Activated CD4-positive, alpha-beta T cell treated with anti-CD3 and anti-CD28 coated beads, Interleukin-2, amount 10 ng/mL, durations not matched to agents 7 days and 5 days (primary cell): ENCODE measurements at regions of chr7 and their contacts with region 1.

Region 1: DNA sequence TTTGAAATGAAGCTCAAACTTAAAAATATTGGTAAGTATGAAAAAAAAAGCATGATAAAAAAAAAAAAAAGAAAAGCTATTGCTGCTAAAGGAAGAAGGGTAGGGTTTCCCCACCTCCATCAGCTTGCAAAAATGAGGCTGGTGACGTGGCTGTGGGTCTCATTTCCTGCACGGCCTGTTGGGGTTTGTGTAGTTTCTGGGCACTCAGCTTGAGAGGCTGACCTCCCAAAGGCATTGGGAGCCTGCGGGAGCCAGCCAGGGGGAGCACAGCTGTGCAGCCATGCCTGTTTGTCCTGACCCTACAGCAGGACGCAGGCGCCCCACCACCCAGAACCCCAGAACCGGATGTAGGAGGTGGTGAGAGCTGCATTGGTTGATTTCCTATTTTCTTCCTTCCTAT is 48.8 kb upstream of the CARD11 start:
- DNase-seq: peak; percentile 83
- H3K4me3 Mint-ChIP-seq: peak overlapping the region; percentile 30
- H3K27ac Mint-ChIP-seq: peak overlapping the region; percentile 93
- H3K4me1 Mint-ChIP-seq: peaks cover 64% of the 10 kb centered on the region
- H3K27me3 Mint-ChIP-seq: no peaks in the 10 kb centered on the region

Region 2: GRCh38 chr7:3065724-3066143 is 26.7 kb before region 1 on chr7:
- CTCF ChIA-PET with region 1: interaction called, 17 read pairs
- POLR2A ChIA-PET with region 1: interaction called, 6 read pairs
- DNase-seq: peak; percentile 58
- H3K4me3 Mint-ChIP-seq: peak overlapping the region; percentile 9
- H3K27ac Mint-ChIP-seq: peak overlapping the region; percentile 66
- H3K4me1 Mint-ChIP-seq: peaks cover 85% of the 10 kb centered on the region
- H3K27me3 Mint-ChIP-seq: no peaks in the 10 kb centered on the region

Region 3: GRCh38 chr7:3073763-3074458 is 18.6 kb before region 1 on chr7:
- CTCF ChIA-PET with region 1: interaction called, 17 read pairs
- POLR2A ChIA-PET with region 1: no interaction called
- DNase-seq: no peak
- H3K4me3 Mint-ChIP-seq: no peak overlapping the region
- H3K27ac Mint-ChIP-seq: no peak overlapping the region
- H3K4me1 Mint-ChIP-seq: peaks cover 23% of the 10 kb centered on the region
- H3K27me3 Mint-ChIP-seq: no peaks in the 10 kb centered on the region

Region 4: DNA sequence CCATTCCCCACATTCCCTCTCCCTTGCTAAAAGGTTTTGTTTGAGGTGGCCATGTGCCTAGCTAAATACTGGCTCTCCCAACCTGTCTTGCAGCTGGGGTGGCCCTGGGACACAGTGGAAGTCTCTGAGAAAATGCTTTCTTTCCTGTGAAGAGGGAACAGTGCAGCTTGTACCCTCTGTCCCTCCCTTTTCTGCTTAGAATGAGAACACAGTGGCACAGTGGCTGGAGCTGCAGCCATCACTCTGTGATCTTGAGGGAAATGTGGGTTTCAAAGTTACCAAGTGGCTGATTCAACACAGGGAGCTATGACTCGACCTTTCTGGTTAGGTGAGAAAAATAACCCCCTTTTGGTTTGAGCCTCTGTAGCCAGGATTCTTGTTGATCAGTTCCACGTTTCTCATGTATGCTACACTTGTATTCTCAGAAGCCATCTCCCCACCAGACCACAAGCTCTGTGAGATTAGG is 13.9 kb after region 1 on chr7:
- CTCF ChIA-PET with region 1: interaction called, 21 read pairs
- POLR2A ChIA-PET with region 1: interaction called, 6 read pairs
- DNase-seq: peak; percentile 48
- H3K4me3 Mint-ChIP-seq: no peak overlapping the region
- H3K27ac Mint-ChIP-seq: peak overlapping the region; percentile 85
- H3K4me1 Mint-ChIP-seq: peaks cover 89% of the 10 kb centered on the region
- H3K27me3 Mint-ChIP-seq: no peaks in the 10 kb centered on the region

Region 5: DNA sequence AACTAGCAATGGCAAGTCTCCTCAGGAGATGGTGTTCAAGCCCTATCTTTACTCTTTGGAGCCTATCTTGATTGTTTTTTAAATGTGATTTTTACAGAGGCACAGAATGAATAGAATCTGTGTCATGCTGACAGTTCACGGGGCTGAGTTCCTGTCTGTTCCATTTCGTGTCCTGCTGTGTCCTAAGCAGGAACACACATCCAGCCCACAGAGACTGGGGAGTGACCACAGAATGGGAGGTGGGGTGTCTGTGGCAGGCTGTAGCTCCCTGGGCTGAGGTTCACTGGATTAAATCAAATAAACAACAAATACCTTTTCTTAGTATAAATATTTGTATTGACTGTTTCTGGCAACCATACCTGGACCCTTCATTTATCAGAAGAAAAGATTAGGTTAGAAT is 24.6 kb after region 1 on chr7:
- CTCF ChIA-PET with region 1: interaction called, 12 read pairs
- POLR2A ChIA-PET with region 1: no interaction called
- DNase-seq: no peak
- H3K4me3 Mint-ChIP-seq: peak overlapping the region; percentile 76
- H3K27ac Mint-ChIP-seq: peak overlapping the region; percentile 89
- H3K4me1 Mint-ChIP-seq: peaks cover 72% of the 10 kb centered on the region
- H3K27me3 Mint-ChIP-seq: no peaks in the 10 kb centered on the region